A673 (cell line): ENCODE measurements at regions of chr9 and their contacts with region 1.

Region 1: DNA sequence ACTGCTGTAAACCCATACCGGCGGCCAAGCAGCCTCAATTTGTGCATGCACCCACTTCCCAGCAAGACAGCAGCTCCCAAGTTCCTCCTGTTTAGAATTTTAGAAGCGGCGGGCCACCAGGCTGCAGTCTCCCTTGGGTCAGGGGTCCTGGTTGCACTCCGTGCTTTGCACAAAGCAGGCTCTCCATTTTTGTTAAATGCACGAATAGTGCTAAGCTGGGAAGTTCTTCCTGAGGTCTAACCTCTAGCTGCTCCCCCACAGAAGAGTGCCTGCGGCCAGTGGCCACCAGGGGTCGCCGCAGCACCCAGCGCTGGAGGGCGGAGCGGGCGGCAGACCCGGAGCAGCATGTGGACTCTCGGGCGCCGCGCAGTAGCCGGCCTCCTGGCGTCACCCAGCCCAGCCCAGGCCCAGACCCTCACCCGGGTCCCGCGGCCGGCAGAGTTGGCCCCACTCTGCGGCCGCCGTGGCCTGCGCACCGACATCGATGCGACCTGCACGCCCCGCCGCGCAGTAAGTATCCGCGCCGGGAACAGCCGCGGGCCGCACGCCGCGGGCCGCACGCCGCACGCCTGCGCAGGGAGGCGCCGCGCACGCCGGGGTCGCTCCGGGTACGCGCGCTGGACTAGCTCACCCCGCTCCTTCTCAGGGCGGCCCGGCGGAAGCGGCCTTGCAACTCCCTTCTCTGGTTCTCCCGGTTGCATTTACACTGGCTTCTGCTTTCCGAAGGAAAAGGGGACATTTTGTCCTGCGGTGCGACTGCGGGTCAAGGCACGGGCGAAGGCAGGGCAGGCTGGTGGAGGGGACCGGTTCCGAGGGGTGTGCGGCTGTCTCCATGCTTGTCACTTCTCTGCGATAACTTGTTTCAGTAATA is at the start of gene FXN:
- DNase-seq: peak; percentile 85
- H3K4me3 ChIP-seq: peak within 1 kb of the TSS; percentile 57
- H3K27ac ChIP-seq: peak within 1 kb of the TSS; percentile 72
- H3K4me1 ChIP-seq: no peaks in the 10 kb centered on the region
- H3K27me3 ChIP-seq: no peaks in the 10 kb centered on the region
- CTCF ChIP-seq: peak; percentile 93
- total RNA-seq, gene FXN: 20.8 and 23.2 TPM in 2 replicates

Region 2: GRCh38 chr9:68981789-68982188 is 53.9 kb before region 1 on chr9:
- CTCF ChIA-PET with region 1: no interaction called
- POLR2A ChIA-PET with region 1: no interaction called
- intact Hi-C with region 1: loop called (anchors 1 kb)
- DNase-seq: peak; percentile 89
- H3K4me3 ChIP-seq: no peak overlapping the region
- H3K27ac ChIP-seq: no peak overlapping the region
- H3K4me1 ChIP-seq: peaks cover 16% of the 10 kb centered on the region
- H3K27me3 ChIP-seq: peaks cover 10% of the 10 kb centered on the region
- CTCF ChIP-seq: no peak

Region 3: GRCh38 chr9:69066955-69067354 is 31.3 kb after region 1 on chr9:
- CTCF ChIA-PET with region 1: no interaction called
- POLR2A ChIA-PET with region 1: no interaction called
- intact Hi-C with region 1: no loop called
- DNase-seq: no peak
- H3K4me3 ChIP-seq: no peak overlapping the region
- H3K27ac ChIP-seq: no peak overlapping the region
- H3K4me1 ChIP-seq: no peaks in the 10 kb centered on the region
- H3K27me3 ChIP-seq: no peaks in the 10 kb centered on the region
- CTCF ChIP-seq: no peak

Region 4: DNA sequence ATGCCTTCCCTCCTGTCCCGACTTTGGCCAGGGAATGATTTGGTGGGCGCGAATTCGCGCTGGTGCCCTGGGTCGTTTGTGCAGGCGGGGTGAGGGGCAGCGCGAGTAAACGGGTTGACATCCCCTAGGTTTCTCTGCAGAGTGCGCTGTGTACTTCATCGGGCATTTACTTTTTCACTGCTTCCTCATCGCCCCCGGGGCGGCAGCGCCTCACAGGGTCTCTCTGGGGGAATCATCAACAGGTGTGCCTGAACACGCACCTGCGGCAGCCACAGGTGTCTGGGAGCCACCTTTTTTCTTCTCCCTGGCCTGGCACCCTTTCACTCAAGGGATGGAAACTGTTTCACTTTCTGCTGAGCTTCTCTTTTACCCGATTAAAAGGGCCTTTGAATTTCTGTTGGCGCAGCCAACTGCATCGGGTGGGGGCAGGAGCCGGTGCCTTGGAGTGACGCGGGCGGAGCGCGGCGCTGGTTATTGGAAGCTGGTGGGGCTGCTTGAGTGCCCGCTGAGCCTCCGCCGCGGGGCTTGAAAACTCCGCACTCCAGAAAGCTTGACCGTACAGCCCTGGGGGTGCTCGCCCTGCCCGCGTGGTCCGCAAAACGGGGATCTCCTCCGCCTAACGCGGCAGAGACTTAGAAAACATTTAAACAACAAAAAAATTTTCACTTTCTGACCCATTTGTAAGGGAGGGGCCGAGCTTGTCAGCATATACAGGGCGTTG is 86.3 kb after region 1 on chr9:
- CTCF ChIA-PET with region 1: no interaction called
- POLR2A ChIA-PET with region 1: no interaction called
- intact Hi-C with region 1: no loop called
- DNase-seq: peak; percentile 70
- H3K4me3 ChIP-seq: peak overlapping the region; percentile 59
- H3K27ac ChIP-seq: no peak overlapping the region
- H3K4me1 ChIP-seq: no peaks in the 10 kb centered on the region
- H3K27me3 ChIP-seq: no peaks in the 10 kb centered on the region
- CTCF ChIP-seq: 0 out of 2 replicates have a peak, but pooled peaks have one; percentile 10

Region 5: GRCh38 chr9:69174616-69175463 is 139.2 kb after region 1 on chr9:
- CTCF ChIA-PET with region 1: no interaction called
- POLR2A ChIA-PET with region 1: no interaction called
- intact Hi-C with region 1: loop called (anchors 5 kb)
- DNase-seq: peak; percentile 86
- H3K4me3 ChIP-seq: peak overlapping the region; percentile 56
- H3K27ac ChIP-seq: peak overlapping the region; percentile 14
- H3K4me1 ChIP-seq: peaks cover 35% of the 10 kb centered on the region
- H3K27me3 ChIP-seq: no peaks in the 10 kb centered on the region
- CTCF ChIP-seq: no peak

Region 6: GRCh38 chr9:69190086-69190862 is 154.6 kb after region 1 on chr9:
- CTCF ChIA-PET with region 1: no interaction called
- POLR2A ChIA-PET with region 1: interaction called, 5 read pairs
- intact Hi-C with region 1: loop called (anchors 5 kb)
- DNase-seq: no peak
- H3K4me3 ChIP-seq: no peak overlapping the region
- H3K27ac ChIP-seq: no peak overlapping the region
- H3K4me1 ChIP-seq: no peaks in the 10 kb centered on the region
- H3K27me3 ChIP-seq: no peaks in the 10 kb centered on the region
- CTCF ChIP-seq: no peak

Region 7: DNA sequence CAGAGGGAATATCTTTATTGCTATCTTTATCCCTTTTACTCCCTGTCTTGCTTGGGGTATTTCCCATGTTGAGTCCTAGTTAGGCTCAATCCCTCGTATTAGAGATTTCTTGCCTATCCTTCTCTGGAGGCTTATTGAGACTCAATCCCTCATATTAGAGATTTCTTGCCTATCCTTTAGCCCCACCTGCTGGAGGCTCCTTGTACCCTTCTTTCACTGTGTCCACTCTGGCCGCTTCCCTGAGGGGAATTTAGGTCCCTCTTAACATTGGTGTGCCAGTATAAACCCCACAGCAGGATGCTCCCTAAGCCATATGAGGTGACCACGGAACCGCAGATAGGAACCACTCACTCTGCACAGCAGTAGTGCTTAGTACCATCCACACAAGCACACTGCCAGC is 897.2 kb after region 1 on chr9:
- CTCF ChIA-PET with region 1: no interaction called
- POLR2A ChIA-PET with region 1: no interaction called
- intact Hi-C with region 1: loop called (anchors 5 kb)
- DNase-seq: peak; percentile 60
- H3K4me3 ChIP-seq: no peak overlapping the region
- H3K27ac ChIP-seq: no peak overlapping the region
- H3K4me1 ChIP-seq: no peaks in the 10 kb centered on the region
- H3K27me3 ChIP-seq: peaks cover 3% of the 10 kb centered on the region
- CTCF ChIP-seq: peak; percentile 55